ENCODE measurements at regions of chr1 and their contacts with region 1.

Region 1: GRCh38 chr1:41416552-41417334 is 55.5 kb downstream of the FOXO6 start:
- DNase-seq: peak; percentile 38 to 50
- ATAC-seq: peak; percentile 66

Region 2: DNA sequence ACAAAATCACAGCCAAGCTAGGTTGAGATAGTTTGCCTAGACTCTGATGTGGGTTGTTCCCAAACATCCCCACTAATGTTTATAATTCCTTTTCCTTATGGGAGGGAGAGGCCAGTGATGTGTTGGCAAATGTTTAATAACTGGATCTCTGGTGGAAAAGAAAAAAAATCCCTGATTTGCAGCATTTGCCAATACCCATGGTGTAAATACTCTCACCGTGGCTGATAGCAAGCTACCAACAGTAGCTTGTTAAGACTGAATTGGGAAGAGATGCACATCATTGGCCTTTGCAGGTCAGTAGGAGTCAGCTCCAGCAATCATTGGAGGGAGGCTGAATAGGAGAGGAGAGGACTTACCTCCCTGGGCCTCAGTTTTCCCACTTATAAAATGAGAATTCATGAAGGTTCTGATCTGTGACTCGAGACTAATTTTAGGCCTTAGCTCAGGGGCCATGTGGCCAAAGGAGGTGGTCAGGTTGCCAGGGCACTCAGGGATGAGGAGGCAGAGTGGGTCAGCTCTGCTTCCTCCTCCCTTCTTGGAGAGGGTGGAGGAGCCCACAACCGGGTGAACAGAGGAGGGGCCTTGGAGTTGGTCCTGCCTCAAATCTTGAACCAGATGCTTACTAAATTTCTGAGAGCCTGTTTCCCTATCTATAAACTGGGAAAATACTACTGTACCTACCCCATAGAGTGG is 154.7 kb before region 1 on chr1:
- intact Hi-C with region 1: loop called in 1 of 2 experiments (anchors 5 kb)
- DNase-seq: no peak
- ATAC-seq: no peak

Region 3: GRCh38 chr1:41274752-41275545 is 141.8 kb before region 1 on chr1:
- intact Hi-C with region 1: loop called (anchors 5 to 10 kb)
- DNase-seq: no peak
- ATAC-seq: no peak